Activated T-helper 1 cell treated with anti-CD3 and anti-CD28 coated beads, Interleukin-12 subunit alpha, Interleukin-12 subunit beta, Interleukin-2, Interleukin-4 antibody, amounts not matched to agents 30 ng/mL and 10 ng/mL and 1 ng/mL, durations not matched to agents 14 hours and 24 hours and 36 hours (primary cell): ENCODE measurements at regions of chr17 and their contacts with region 1.

Region 1: DNA sequence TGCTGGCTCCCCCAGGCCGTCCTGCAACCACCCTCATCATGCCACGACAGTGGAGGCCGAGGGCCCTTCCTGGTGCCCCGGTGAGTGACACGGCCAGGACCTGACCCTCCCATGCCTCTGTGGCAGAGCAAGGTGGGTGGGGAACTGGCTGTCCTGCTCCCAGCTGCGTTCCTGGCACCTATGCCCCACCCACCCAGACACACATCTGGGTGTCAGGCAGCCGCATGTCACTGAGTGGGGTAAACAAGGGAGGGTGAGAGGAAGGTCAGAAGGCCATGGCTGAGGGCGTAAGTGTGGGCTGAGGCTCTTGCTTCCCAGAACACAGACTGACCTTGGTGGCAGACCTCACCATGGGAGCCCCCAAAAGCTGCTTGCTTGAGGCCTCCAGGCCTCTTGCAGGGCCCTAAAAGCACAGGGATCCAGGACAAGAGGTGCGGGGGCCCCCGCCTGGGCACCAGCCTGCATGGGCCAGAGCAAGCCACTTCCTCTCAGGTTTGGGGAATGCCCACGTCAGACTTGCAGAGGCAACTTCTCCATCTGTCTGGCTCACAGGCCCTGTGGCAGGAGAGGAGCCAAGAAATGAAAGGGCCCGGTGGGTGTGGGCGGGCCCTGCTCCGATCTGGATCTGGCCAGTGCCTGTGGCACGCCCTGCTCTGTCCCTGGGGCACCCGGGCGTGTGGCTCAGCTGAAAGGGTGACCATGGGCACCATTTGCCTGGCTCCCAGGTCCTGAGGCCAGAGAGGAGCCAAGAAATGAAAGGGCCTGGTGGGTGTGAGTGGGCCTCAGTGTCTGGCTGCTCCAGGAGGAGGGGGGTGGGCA is 3.9 kb upstream of the CCDC57 start:
- DNase-seq: peak; percentile 35
- H3K4me3 Mint-ChIP-seq: peak overlapping the region; percentile 22
- H3K27ac Mint-ChIP-seq: peak overlapping the region; percentile 84
- H3K4me1 Mint-ChIP-seq: peaks cover 29% of the 10 kb centered on the region
- H3K27me3 Mint-ChIP-seq: peaks cover 2% of the 10 kb centered on the region

Region 2: DNA sequence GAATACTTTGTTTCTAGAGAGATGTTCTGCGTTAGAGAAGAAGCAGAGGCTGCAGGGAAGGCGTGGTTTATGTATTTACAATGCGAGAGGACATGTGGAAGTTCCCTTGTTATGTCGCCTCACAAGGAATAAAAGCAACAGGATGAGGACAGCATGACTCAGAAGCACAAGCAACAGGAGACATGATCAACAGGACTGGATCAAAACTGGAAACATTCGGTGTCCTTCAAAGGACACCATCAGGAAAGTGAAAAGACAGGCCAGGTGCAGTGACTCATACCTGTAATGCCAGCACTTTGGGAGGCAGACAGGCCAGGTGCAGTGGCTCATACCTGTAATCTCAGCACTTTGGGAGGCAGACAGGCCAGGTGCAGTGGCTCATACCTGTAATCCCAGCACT is 56.4 kb before region 1 on chr17:
- intact Hi-C with region 1: no loop called
- DNase-seq: no peak
- H3K4me3 Mint-ChIP-seq: no peak overlapping the region
- H3K27ac Mint-ChIP-seq: no peak overlapping the region
- H3K4me1 Mint-ChIP-seq: no peaks in the 10 kb centered on the region
- H3K27me3 Mint-ChIP-seq: no peaks in the 10 kb centered on the region

Region 3: DNA sequence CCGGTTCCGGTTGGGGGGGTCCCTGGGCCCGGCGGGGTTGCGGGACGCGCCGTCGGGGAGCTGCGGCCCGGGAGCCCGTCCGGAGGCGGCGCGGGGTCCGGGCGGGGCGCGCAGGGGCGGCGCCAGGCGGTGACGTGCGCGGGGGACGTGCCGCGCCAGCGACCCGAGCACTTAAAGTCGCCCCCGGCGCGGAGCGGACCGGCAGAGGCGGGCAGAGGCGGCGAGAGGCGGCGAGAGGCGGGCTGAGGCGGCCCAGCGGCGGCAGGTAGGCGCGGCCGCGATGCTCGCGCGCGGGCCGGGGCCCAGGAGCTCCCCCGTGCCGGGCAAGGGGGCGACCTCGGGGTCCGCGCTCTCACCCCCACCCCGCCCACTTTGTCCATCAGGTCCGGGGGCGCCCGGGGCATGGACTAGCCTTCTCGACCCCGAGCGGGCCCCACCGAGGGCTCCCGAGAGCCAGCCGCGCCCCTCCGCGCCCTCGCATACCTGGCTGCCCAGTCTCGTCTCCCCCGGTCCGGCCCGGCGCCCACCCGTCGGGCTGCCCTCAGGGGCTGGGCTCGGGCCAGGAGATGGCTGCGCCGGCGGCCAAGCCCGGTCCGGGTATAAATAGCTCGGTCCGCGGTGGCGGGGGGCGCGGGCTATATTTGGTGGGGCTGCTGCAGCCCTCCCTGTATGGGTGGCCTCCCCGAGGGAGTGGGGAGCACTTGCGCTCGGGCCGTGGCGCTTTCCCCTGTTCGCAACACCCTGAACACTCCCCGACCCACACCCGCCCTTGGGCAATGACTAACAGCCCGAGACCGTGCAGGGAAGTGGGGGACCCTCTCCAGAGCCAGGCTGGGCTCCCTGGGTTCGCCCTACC is 12.6 kb after region 1 on chr17 and contains the start of gene SLC16A3:
- intact Hi-C with region 1: loop called (anchors 1 kb)
- DNase-seq: peak; percentile 72
- H3K4me3 Mint-ChIP-seq: peak within 1 kb of the TSS; percentile 94
- H3K27ac Mint-ChIP-seq: peak within 1 kb of the TSS; percentile 90
- H3K4me1 Mint-ChIP-seq: peaks cover 5% of the 10 kb centered on the region
- H3K27me3 Mint-ChIP-seq: no peaks in the 10 kb centered on the region
- total RNA-seq, gene SLC16A3: 111 and 115 TPM in 2 replicates